MCF 10A (cell line): ENCODE measurements at regions of chr7 and their contacts with region 1.

Region 1: DNA sequence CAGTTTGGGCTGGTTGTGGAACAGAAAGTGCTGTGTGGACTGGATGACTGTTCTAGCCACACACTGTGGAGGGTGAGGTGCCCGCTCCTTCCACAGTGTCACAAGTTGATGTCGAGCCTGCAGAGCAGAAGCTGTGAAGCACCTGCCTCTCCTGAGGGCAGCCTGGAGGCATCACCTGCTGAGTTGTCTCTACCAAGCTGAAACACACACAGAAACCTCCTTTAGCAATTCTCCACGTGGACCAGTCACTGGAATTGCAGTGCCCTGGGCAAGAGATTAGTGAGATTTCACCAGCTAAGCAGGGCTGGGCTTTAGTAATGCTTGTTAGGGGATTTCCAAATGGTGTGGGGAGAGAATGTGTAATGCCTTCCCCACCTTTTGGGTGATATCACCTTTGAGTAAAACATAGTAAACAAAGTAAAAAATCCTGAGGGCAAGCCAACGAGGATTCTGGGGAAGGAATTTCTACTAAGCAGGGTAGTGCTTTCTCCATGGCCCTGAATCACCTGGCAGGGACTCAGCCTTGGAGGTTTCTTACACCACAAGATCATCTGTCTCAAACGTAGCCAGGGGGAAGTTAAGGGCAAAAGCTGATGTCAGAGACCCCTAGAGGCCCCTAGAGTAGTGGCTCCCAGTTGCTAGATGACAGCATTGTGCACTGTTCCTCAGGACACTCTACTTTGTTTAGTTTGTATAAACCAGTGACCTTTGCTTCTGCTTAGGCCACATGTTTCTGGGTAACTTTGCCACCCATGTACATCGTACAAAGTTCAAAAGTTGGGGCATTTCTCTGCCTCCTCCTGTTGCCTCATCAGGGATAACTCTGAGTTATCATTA is 233.1 kb upstream of the IGFBP3 start:
- DNase-seq: peak; percentile 80
- H3K4me3 Mint-ChIP-seq: no peak overlapping the region
- H3K27ac Mint-ChIP-seq: peak overlapping the region; percentile 81
- H3K4me1 Mint-ChIP-seq: peaks cover 25% of the 10 kb centered on the region
- H3K27me3 Mint-ChIP-seq: no peaks in the 10 kb centered on the region
- CTCF ChIP-seq: no peak

Region 2: DNA sequence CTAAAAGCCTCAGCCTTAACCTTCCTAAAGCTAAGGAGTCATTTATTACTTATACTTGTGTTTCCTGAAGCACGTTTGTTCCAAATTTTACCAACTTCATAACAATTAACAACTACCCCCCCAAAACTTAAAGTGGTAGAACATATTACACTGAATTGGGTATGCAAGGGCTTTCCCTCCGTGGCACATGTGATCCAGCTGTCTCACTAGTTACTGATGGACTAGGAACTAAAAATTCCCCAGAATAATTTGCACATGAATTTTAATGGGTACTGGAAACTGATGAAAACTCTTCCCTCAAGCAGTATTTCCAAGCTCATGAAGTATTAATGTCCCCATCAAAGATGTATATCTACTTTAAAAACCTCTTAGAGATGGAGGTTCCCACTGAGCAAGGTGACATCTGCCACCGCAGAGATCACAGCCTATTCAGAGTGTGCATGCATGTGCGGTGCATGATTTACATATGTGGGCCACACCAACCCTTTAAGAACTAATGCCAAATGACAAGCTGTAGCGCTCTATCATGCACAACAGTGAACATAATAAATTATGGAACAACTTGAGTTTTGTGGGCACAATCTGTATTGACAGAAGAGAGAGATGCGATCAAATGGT is 719.9 kb before region 1 on chr7:
- CTCF ChIA-PET with region 1: no interaction called
- POLR2A ChIA-PET with region 1: no interaction called
- intact Hi-C with region 1: no loop called
- DNase-seq: no peak
- H3K4me3 Mint-ChIP-seq: no peak overlapping the region
- H3K27ac Mint-ChIP-seq: no peak overlapping the region
- H3K4me1 Mint-ChIP-seq: peaks cover 13% of the 10 kb centered on the region
- H3K27me3 Mint-ChIP-seq: peaks cover 15% of the 10 kb centered on the region
- CTCF ChIP-seq: no peak

Region 3: DNA sequence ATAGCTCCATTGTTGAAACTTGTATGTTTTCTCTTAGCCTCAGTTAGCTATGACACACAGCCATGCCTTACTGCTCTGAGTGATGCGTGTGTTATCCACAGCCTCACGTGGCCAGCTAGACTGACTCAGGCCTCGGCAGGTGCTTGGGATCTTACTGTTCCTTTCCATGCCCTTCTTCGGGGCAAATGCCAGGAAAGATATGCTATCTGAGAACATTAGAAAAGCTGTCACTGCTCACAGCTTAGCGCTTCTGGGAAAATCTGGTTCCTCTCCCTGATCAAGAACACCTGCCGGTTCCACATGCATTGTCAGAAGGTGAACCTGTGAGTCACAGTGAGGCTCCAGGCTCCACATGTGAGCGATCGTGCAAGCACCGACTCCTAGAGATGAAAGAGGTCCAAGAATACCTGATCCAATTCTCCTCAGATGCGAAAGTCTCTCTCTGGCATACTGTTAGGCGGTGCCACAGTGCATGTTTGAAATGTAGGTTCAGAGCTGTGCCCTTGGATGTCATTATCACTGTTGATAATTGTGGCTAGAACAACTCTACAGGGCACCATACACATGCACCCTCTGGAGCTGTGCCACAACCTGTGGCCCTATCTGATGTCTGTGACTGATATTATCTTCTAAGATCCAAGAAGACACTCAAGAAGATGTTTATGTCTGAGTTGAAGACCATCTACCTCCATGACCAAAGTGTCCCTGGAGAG is 14.7 kb after region 1 on chr7:
- CTCF ChIA-PET with region 1: interaction called, 4 read pairs
- POLR2A ChIA-PET with region 1: interaction called, 13 read pairs
- intact Hi-C with region 1: no loop called
- DNase-seq: peak; percentile 37
- H3K4me3 Mint-ChIP-seq: no peak overlapping the region
- H3K27ac Mint-ChIP-seq: no peak overlapping the region
- H3K4me1 Mint-ChIP-seq: peaks cover 26% of the 10 kb centered on the region
- H3K27me3 Mint-ChIP-seq: no peaks in the 10 kb centered on the region
- CTCF ChIP-seq: no peak